ENCODE measurements at regions of chr12 and their contacts with region 1.

Region 1: GRCh38 chr12:53427905-53428594 is 4.4 kb downstream of the AMHR2 start:
- DNase-seq: no peak
- CTCF ChIP-seq: no peak

Region 2: DNA sequence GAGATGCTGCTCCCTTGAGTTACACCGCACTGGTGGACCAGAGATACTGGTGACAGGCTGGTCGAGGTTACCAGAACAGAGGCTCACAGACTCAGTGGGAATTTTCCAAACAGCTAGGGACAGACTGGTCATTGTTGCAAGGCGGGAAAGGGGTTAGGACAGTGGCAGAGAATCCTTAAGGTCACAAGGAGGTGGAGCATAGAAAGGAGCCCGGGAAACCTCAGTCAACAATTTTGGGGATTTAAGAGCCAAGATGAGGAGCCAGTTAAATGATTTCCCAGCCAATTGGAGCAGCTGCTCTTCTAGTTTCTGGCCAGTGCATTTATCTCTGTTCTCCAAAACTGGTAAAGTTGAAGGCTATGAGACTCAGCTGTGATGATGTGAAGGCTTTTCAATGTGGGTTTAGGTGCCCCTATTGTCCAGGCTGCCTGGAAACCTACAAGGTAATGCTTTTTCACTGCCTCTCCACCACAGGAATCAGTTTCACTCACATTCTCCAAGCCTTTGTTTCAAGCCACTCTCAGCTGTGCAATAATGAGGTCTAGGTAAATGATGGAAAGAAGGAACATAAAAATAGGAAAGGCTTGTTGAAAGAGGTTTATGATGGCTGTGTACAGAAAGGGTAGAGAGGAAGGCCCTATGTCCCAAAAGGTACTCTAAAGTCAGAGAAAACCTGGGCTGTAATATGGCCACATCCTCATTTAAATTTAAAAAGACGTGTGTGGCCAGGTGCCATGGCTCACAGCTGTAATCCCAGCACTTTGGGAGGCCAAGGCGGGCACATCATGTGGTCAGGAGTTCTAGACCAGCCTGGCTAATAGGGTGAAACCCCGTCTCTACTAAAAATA is 385.2 kb before region 1 on chr12:
- CTCF ChIA-PET with region 1: no interaction called
- POLR2A ChIA-PET with region 1: no interaction called
- DNase-seq: no peak
- CTCF ChIP-seq: no peak

Region 3: DNA sequence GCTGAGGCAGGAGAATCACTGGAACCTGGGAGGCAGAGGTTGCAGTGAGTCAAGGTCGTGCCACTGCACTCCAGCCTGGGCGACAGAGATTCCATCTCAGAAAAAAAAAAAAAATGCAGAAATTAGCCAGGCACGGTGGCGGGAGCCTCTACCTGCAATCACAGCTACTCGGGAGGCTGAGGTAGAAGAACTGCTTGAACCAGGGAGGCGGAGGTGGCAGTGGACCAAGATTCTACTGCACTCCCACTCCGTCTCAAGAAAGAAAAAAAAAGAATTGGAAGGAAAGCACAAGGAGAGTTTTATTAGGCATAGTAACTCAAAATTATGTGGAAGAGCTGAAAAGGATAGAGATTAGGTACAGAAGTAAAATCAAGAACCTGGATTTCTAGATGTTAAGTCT is 25.2 kb before region 1 on chr12:
- CTCF ChIA-PET with region 1: no interaction called
- POLR2A ChIA-PET with region 1: no interaction called
- DNase-seq: no peak
- CTCF ChIP-seq: no peak

Region 4: DNA sequence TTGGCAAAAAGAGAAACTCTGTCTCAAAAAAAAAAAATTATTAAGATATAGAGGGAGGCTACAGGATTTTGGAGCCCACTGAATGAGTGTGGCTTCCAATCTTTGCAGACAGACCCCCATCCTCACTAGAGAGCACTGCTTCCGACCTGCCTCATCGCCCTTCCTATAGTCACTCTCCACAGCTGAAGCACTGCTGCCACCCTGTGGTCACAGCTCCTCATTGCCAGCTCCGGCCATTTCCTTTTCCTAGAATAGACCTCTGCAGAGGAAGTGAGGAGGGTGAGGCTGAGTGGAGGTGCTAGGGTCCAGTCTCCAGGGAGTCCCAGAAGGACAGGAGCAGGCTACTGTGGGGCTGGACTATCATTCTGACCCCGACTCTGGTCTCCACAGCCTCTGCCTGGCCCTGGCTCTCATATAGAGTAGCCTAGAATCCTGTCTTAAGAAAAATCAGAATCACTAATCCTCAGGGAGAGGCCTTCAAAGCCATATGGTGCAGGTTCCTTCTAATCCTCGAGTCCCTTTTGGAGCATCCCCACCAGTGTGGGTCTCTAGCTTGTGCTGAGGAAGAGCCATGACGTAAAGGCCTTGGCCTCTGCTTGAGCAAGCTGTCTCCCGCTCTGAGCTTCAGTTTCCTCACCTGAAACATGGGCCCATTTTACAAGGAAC is 80.6 kb after region 1 on chr12:
- CTCF ChIA-PET with region 1: interaction called, 10 read pairs
- POLR2A ChIA-PET with region 1: no interaction called
- DNase-seq: peak; percentile 82
- CTCF ChIP-seq: peak; percentile 99

Measured in GM10248 (cell line).